Left cardiac atrium (tissue), 4 donors: ENCODE measurements at regions of chr1 and their contacts with region 1.

Region 1: GRCh38 chr1:173779936-173780335 is 44.5 kb upstream of the DARS2 start:
- DNase-seq: no peak
- ATAC-seq: no peak

Region 2: DNA sequence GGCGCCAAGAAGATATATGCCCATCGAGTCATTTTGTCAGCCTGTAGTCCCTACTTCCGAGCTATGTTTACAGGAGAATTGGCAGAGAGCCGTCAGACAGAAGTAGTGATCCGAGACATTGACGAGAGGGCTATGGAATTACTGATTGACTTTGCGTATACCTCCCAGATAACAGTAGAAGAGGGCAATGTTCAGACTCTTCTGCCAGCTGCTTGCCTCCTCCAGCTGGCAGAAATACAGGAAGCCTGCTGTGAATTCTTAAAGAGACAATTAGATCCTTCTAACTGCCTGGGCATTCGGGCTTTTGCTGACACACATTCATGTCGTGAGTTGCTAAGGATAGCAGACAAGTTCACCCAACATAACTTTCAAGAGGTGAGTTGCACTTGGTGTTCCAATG is 46.0 kb before region 1 on chr1:
- intact Hi-C with region 1: loop called in 1 of 2 experiments (anchors 10 kb)
- DNase-seq: no peak
- ATAC-seq: no peak